GM12878 (cell line): ENCODE measurements at regions of chr1 and their contacts with region 1.

Region 1: DNA sequence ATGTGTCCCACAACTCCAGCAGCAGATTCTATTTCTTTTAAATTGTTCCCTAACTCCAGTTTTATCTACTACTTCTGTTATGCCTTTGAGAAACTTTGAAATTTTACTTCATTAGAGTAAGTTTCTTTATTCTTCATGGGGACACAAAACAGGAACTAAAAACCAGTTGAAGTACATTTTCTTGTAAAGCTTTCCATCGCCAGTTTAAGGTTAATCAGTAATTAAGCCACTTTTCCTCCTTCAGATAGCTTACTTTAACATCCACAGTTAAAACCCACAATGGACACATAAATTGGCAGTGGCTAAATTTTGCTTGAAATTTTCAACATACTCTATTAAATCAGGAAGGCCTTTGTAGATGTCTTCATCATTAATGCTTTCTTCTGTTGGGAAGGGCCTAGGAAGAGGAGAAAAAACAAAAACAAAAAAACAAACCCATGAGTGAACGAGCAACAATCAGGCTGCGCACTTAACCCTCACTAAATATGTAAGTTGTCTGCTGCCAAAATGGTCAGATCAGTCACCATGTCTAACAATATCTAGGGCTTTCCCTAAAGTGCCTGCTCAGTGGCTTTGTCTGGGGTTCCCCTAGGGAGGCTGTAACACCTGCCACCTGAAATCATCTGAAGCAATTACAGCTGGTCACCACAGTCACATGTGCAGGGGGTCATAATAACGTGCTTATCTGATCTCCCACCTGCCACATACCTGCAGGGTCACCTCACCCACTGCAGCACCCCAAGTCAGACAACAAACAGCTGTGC is 187.9 kb downstream of the VAV3 start:
- DNase-seq: peak; percentile 64
- ATAC-seq: peak; percentile 95
- H3K4me3 ChIP-seq: peak overlapping the region; percentile 6; the same call in 1 of the 2 replicates
- H3K27ac ChIP-seq: peak overlapping the region; percentile 61
- H3K4me1 ChIP-seq: peaks cover 11% of the 10 kb centered on the region
- H3K27me3 ChIP-seq: no peaks in the 10 kb centered on the region
- CTCF ChIP-seq: no peak
- EP300 ChIP-seq: peak; percentile 79 to 83; a peak in 3 of 4 replicates
- POLR2A ChIP-seq: no peak
- RAD21 ChIP-seq: no peak

Region 2: GRCh38 chr1:107213225-107213624 is 563.9 kb before region 1 on chr1:
- CTCF ChIA-PET with region 1: no interaction called
- POLR2A ChIA-PET with region 1: no interaction called
- RAD21 ChIA-PET with region 1: no interaction called
- SMC1A ChIA-PET with region 1: no interaction called
- in situ Hi-C with region 1: no loop called
- intact Hi-C with region 1: no loop called
- DNase-seq: no peak
- ATAC-seq: no peak
- H3K4me3 ChIP-seq: no peak overlapping the region
- H3K27ac ChIP-seq: no peak overlapping the region
- H3K4me1 ChIP-seq: no peaks in the 10 kb centered on the region
- H3K27me3 ChIP-seq: no peaks in the 10 kb centered on the region
- CTCF ChIP-seq: no peak
- EP300 ChIP-seq: no peak
- POLR2A ChIP-seq: no peak
- RAD21 ChIP-seq: no peak

Region 3: GRCh38 chr1:107640207-107640606 is 136.9 kb before region 1 on chr1:
- CTCF ChIA-PET with region 1: no interaction called
- POLR2A ChIA-PET with region 1: no interaction called
- RAD21 ChIA-PET with region 1: no interaction called
- SMC1A ChIA-PET with region 1: no interaction called
- in situ Hi-C with region 1: no loop called
- intact Hi-C with region 1: no loop called
- DNase-seq: no peak
- ATAC-seq: no peak
- H3K4me3 ChIP-seq: no peak overlapping the region
- H3K27ac ChIP-seq: no peak overlapping the region
- H3K4me1 ChIP-seq: no peaks in the 10 kb centered on the region
- H3K27me3 ChIP-seq: no peaks in the 10 kb centered on the region
- CTCF ChIP-seq: no peak
- EP300 ChIP-seq: no peak
- POLR2A ChIP-seq: no peak
- RAD21 ChIP-seq: no peak

Region 4: GRCh38 chr1:107762751-107763390 is 14.2 kb before region 1 on chr1:
- CTCF ChIA-PET with region 1: interaction called, 8 read pairs
- POLR2A ChIA-PET with region 1: no interaction called
- RAD21 ChIA-PET with region 1: interaction called, 7 read pairs
- SMC1A ChIA-PET with region 1: interaction called, 11 read pairs
- in situ Hi-C with region 1: no loop called
- intact Hi-C with region 1: no loop called
- DNase-seq: no peak
- ATAC-seq: no peak
- H3K4me3 ChIP-seq: no peak overlapping the region
- H3K27ac ChIP-seq: no peak overlapping the region
- H3K4me1 ChIP-seq: no peaks in the 10 kb centered on the region
- H3K27me3 ChIP-seq: no peaks in the 10 kb centered on the region
- CTCF ChIP-seq: no peak
- EP300 ChIP-seq: no peak
- POLR2A ChIP-seq: no peak
- RAD21 ChIP-seq: no peak

Region 5: DNA sequence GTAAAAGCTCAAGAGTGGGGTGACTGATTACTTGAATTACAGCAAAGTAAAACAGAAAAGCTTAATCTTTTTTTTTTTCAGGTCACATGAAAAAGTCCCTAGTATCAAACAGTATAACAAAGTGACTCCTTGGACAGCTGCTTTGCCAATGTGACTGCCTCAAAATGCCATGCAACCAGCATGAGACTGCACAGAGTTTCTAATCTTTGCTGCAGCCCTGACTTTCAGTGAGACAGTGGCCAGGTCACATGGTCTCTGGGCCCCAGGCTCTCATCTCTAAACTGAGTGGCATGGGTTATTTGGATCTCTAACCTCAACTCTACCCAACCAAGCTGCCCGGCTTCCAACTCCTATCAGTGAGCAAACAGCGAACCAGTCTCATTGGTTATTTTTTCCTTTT is 18.9 kb after region 1 on chr1:
- CTCF ChIA-PET with region 1: interaction called, 24 read pairs
- POLR2A ChIA-PET with region 1: no interaction called
- RAD21 ChIA-PET with region 1: interaction called, 47 read pairs
- SMC1A ChIA-PET with region 1: interaction called, 16 read pairs
- in situ Hi-C with region 1: no loop called
- intact Hi-C with region 1: no loop called
- DNase-seq: no peak
- ATAC-seq: peak; percentile 84
- H3K4me3 ChIP-seq: no peak overlapping the region
- H3K27ac ChIP-seq: no peak overlapping the region
- H3K4me1 ChIP-seq: peaks cover 4% of the 10 kb centered on the region; the same call in 1 of the 2 replicates
- H3K27me3 ChIP-seq: no peaks in the 10 kb centered on the region; a peak in 1 of 4 replicates
- CTCF ChIP-seq: no peak
- EP300 ChIP-seq: no peak
- POLR2A ChIP-seq: no peak
- RAD21 ChIP-seq: no peak